Panc1 (cell line): ENCODE measurements at regions of chr1 and their contacts with region 1.

Region 1: GRCh38 chr1:13790290-13791030 is 90.5 kb downstream of the PRDM2 start:
- DNase-seq: no peak
- ATAC-seq: no peak
- H3K4me3 ChIP-seq: no peak overlapping the region
- H3K27ac ChIP-seq: no peak overlapping the region
- H3K4me1 ChIP-seq: no peaks in the 10 kb centered on the region
- H3K27me3 ChIP-seq: no peaks in the 10 kb centered on the region
- CTCF ChIP-seq: no peak

Region 2: DNA sequence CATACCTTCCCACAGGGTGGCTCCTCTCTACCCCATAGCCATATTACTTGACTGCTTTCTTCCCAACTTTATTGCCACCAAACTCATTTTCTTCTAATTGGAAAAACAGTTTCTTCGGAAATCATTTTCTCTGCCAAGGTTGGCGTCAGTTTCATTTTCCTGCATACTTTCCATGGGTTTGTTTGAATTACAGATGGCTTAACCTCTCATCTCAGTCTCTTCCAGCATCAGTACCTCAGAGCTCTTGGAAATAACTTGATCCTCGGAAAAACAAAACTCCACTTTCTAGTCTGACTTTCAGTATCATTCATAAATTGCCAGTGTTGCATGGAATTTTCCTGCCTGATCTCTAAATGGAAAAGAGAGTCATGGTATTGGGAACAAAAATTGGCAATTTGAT is 110.8 kb before region 1 on chr1:
- CTCF ChIA-PET with region 1: no interaction called
- POLR2A ChIA-PET with region 1: no interaction called
- in situ Hi-C with region 1: no loop called
- intact Hi-C with region 1: no loop called
- DNase-seq: no peak
- ATAC-seq: no peak
- H3K4me3 ChIP-seq: no peak overlapping the region
- H3K27ac ChIP-seq: no peak overlapping the region
- H3K4me1 ChIP-seq: no peaks in the 10 kb centered on the region
- H3K27me3 ChIP-seq: no peaks in the 10 kb centered on the region
- CTCF ChIP-seq: no peak

Region 3: DNA sequence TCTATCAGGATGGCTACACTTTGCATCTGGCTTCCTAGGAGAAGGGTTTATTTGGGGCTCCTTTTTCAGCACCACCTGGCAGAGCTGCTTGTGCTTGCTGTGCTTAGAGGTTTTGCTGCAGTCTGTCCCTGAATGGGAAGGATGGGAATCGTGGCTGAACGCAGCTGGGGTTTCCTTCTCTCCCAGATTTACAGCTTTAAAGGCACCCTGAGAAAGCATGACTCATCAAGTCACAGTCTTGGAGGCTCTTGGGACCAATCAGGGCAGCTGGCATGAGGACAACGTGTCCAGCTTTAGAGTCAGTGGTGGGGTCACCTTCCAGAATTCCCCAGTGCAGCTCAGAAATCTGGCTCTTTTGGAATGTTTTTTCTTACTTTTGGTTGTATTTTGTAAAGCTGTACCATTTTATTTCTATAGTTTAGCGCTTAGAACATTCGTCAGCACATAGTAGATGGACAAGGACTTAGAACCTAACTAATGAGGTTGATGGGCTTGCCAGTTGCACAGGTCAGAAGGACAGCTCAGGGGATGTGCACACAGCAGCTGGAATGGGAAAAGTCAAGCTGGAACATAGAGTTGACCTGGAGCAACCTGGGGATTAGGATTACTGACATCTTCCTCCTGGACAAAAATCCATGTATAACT is 132.1 kb after region 1 on chr1:
- CTCF ChIA-PET with region 1: no interaction called
- POLR2A ChIA-PET with region 1: interaction called, 14 read pairs
- in situ Hi-C with region 1: no loop called
- intact Hi-C with region 1: no loop called
- DNase-seq: no peak
- ATAC-seq: no peak
- H3K4me3 ChIP-seq: no peak overlapping the region
- H3K27ac ChIP-seq: no peak overlapping the region
- H3K4me1 ChIP-seq: no peaks in the 10 kb centered on the region
- H3K27me3 ChIP-seq: peaks cover under 1% of the 10 kb centered on the region; the same call in 1 of the 2 replicates
- CTCF ChIP-seq: no peak

Region 4: DNA sequence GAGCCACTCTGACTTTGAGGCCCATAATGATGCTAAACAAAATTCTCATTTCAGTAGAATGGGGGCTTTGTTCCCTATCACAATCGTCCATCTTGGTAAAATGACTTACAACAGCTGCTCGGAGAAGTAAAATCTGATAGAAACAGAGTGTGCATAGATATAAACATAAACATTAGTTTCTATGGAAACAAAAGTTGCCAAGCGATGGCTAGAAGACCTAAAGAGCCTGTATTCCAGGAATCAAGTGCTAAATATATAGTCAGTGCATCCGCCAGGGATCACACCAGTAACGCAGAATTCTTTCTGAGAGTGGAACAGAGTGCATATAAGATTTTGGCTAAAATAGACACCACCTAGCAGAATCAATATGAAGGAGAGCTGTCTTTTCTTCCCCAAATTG is 716.8 kb after region 1 on chr1:
- CTCF ChIA-PET with region 1: no interaction called
- POLR2A ChIA-PET with region 1: no interaction called
- in situ Hi-C with region 1: no loop called
- intact Hi-C with region 1: no loop called
- DNase-seq: no peak
- ATAC-seq: no peak
- H3K4me3 ChIP-seq: no peak overlapping the region
- H3K27ac ChIP-seq: no peak overlapping the region
- H3K4me1 ChIP-seq: no peaks in the 10 kb centered on the region
- H3K27me3 ChIP-seq: peaks cover 8% of the 10 kb centered on the region
- CTCF ChIP-seq: no peak